H1 (cell line): ENCODE measurements at regions of chr1 and their contacts with region 1.

Region 1: GRCh38 chr1:27057801-27058625 is 45.4 kb upstream of the TENT5B start:
- DNase-seq: peak in 1 of 2 experiments; percentile 65
- H3K4me3 ChIP-seq: peak overlapping the region in 2 of 4 experiments; percentile 11 to 31; a peak in 4 of 8 replicates
- H3K27ac ChIP-seq: peak overlapping the region; percentile 26; the same call in 1 of the 2 replicates
- H3K4me1 ChIP-seq: peaks cover 3 to 26% (median 19%) of the 10 kb centered on the region in 4 experiments
- H3K27me3 ChIP-seq: no peaks in the 10 kb centered on the region
- CTCF ChIP-seq: no peak
- EP300 ChIP-seq: no peak
- POLR2A ChIP-seq: 0 out of 3 replicates have a peak, but pooled peaks of 1 of the 2 experiments have one; percentile 27
- RAD21 ChIP-seq: no peak

Region 2: DNA sequence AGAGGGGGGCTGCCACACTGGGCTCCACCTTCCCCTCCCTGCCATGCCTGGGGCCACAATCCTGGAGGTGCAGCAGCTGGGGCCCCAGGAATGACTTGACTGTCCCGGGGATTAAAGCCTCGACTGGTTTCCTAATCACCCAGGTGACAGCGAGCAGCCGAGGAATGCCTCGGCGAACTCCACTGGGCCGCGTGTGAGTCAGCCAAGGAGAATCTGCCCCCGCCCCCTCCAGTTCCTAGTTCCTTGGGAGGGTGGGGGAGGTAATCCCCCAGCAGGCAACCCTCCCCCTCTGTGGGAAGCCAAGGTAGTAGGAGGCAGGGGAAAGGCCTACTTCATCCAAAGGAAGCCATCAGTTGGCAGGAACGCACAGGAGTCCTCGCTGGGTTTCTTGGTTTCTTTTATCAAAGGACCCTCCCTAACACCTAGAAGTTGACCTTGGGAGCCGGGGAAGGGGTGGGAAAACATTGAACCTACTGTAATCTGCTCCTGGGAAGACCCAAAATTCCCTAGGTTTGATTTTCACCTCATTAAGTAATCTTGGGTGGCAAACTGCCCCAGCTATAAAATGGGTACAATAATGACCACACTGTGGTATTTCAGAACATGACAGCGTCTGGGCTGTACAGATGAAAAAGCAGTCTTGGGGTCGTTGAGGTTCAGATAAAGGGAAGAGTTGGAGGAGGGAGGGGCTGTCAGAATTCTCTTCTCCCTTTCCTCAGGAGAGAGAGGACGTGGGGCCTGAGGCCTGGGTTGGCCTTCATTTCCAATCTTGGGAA is 46.8 kb before region 1 on chr1:
- CTCF ChIA-PET with region 1: interaction called, 3 read pairs
- POLR2A ChIA-PET with region 1: interaction called, 11 read pairs
- DNase-seq: peak in 1 of 2 experiments; percentile 85
- H3K4me3 ChIP-seq: peak overlapping the region; percentile 88 to 100 (median 92)
- H3K27ac ChIP-seq: peak overlapping the region; percentile 64; the same call in 1 of the 2 replicates
- H3K4me1 ChIP-seq: peaks cover 18 to 39% (median 33%) of the 10 kb centered on the region in 4 experiments
- H3K27me3 ChIP-seq: no peaks in the 10 kb centered on the region
- CTCF ChIP-seq: no peak
- EP300 ChIP-seq: no peak; a peak in 1 of 3 replicates
- POLR2A ChIP-seq: peak in 1 of 2 experiments; percentile 54; a peak in 1 of 3 replicates
- RAD21 ChIP-seq: no peak; a peak in 1 of 4 replicates

Region 3: GRCh38 chr1:27021354-27022031 is 36.5 kb before region 1 on chr1:
- CTCF ChIA-PET with region 1: no interaction called
- POLR2A ChIA-PET with region 1: no interaction called
- DNase-seq: no peak
- H3K4me3 ChIP-seq: no peak overlapping the region
- H3K27ac ChIP-seq: no peak overlapping the region
- H3K4me1 ChIP-seq: peaks cover 0 to 6% (median 4%) of the 10 kb centered on the region in 4 experiments
- H3K27me3 ChIP-seq: no peaks in the 10 kb centered on the region; a peak in 1 of 7 replicates
- CTCF ChIP-seq: no peak
- EP300 ChIP-seq: no peak
- POLR2A ChIP-seq: no peak
- RAD21 ChIP-seq: no peak

Region 4: GRCh38 chr1:27071049-27071416 is 13.0 kb after region 1 on chr1:
- CTCF ChIA-PET with region 1: interaction called, 270 read pairs
- POLR2A ChIA-PET with region 1: interaction called, 12 read pairs
- DNase-seq: no peak
- H3K4me3 ChIP-seq: no peak overlapping the region
- H3K27ac ChIP-seq: no peak overlapping the region
- H3K4me1 ChIP-seq: peaks cover 0 to 9% (median 6%) of the 10 kb centered on the region in 4 experiments; a peak in 5 of 7 replicates
- H3K27me3 ChIP-seq: no peaks in the 10 kb centered on the region
- CTCF ChIP-seq: no peak
- EP300 ChIP-seq: no peak
- POLR2A ChIP-seq: no peak
- RAD21 ChIP-seq: no peak